ENCODE measurements at regions of chr6 and their contacts with region 1.

Region 1: DNA sequence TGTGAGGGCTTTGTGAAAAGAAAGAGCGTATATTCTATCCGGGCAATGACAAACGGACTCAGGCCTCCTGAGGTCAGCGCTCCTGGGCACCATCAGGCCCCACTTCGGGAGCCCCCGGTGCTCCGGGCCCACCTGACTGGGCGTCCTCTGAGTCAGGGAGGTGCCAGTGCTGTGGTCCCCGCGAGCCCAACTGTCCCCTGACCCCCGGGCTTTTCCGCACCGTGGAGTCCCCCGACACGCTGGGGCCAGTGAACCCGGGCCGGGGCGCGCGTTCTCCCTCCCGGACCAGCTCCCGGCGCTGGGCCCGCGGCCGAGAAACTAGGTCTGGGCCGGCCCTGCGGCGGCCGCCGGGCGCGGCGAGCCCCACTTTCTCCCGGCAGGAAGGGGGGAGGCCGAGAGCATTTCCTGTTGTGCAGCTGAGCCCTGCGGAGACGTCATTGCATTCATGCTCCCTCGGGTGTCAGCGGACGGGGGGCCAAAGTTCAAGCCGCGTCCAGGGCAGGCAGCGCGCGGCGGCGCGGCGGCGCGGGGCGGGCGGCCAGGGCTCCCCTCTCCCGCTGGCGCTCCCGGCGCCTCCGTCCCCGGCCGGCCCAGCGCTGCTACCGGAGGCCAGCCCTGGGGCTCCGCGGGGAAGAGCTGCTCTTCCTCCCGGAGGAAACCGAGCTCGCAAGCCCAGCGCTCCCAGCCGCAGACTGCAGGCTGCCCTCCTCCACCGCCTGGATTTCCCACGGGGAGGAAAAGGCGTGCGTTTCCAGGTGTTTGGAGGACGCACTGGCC is 18.3 kb downstream of the HIVEP2 start:
- DNase-seq: peak in 1 of 2 experiments; percentile 76
- H3K4me3 ChIP-seq: peak overlapping the region; percentile 29 to 72 (median 50)
- H3K27ac ChIP-seq: no peak overlapping the region
- H3K4me1 ChIP-seq: peaks cover 0 to 4% (median 0%) of the 10 kb centered on the region in 4 experiments; a peak in 2 of 7 replicates
- H3K27me3 ChIP-seq: no peaks in the 10 kb centered on the region; a peak in 1 of 7 replicates
- CTCF ChIP-seq: no peak
- EP300 ChIP-seq: no peak
- POLR2A ChIP-seq: peak in 1 of 2 experiments; percentile 54; a peak in 1 of 3 replicates
- RAD21 ChIP-seq: peak in 1 of 2 experiments; percentile 1; a peak in 1 of 4 replicates

Region 2: DNA sequence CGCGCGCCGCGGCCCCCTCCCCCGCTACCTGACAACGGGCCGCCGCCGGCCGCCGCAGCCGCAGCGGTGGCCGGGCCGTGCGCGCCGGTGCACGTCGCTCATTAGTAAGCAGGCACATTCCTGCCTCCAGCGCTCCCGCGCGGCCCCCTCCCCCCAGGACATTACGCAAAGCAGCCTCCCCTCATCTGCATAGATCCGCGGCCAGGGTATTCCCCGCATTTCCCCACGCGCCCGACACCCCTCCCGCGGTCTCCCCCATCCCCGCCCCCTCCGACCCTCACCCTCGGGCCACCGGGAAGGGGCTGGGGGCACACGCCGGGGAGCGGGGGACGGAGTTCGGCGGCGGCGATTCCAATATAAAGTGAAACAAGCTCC is 18.4 kb after region 1 on chr6 and contains the start of gene HIVEP2:
- CTCF ChIA-PET with region 1: interaction called, 11 read pairs
- POLR2A ChIA-PET with region 1: interaction called, 10 read pairs
- DNase-seq: peak in 1 of 2 experiments; percentile 81
- H3K4me3 ChIP-seq: peak within 1 kb of the TSS; percentile 74 to 98 (median 94)
- H3K27ac ChIP-seq: peak within 1 kb of the TSS; percentile 87
- H3K4me1 ChIP-seq: peaks cover 0 to 3% (median 0%) of the 10 kb centered on the region in 4 experiments; a peak in 4 of 7 replicates
- H3K27me3 ChIP-seq: peaks cover 0 to 4% (median 1%) of the 10 kb centered on the region in 4 experiments; a peak in 2 of 7 replicates
- CTCF ChIP-seq: no peak
- EP300 ChIP-seq: peak in 1 of 2 experiments; percentile 69; a peak in 1 of 3 replicates
- POLR2A ChIP-seq: no peak
- RAD21 ChIP-seq: no peak
- total RNA-seq, gene HIVEP2: 5.9 and 6.1 TPM in 2 replicates